Heart left ventricle (tissue), 16 donors: ENCODE measurements at regions of chr2 and their contacts with region 1.

Region 1: DNA sequence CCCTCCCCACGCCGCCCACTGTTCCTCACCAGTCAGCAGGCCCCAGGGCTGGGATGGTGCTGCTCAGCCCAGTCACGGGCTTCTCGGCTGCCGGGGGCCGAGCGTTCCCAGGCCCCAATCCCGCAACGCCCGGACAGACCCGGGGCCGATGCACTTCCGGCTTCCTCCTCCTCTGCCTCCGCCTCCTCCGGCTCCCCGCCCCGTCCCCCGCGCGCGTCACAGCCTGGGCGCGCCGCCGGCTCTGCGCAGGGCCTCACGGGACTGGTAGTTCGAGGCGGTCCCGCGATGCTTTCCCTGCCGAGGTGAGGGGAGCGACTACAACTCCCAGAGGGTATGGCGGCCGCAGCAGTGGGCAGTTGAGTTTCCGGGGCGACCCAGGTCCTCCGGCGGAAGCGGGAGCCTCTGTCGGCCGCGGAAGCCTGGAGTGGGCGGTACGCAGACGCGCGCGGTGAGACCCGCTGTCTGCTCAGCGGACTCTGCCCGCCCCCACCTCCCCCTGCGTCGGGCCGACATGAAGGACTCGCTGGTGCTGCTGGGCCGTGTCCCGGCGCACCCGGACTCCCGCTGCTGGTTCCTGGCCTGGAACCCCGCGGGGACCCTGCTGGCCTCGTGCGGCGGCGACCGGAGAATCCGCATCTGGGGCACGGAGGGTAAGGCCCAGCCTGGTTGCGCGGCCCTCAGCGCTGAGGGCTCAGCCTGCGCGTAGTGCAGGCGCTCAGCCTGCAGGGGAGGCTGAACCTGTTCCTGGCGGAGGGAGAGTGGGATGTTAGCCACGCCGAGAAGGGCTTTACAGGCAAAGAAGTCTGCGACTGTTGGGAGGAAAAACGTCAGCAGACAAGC is at the starts of genes CIAO1 and TMEM127:
- DNase-seq: peak; percentile 99 to 100 (median 99)
- ATAC-seq: peak; percentile 95 to 97 (median 96)
- H3K4me3 ChIP-seq: peak within 1 kb of the TSS; percentile 72 to 100 (median 90)
- H3K27ac ChIP-seq: peak within 1 kb of the TSS; percentile 86 to 98 (median 95)
- H3K4me1 ChIP-seq: peaks cover 16 to 55% (median 49%) of the 10 kb centered on the region in 12 donors
- H3K27me3 ChIP-seq: no peaks in the 10 kb centered on the region
- CTCF ChIP-seq: peak in 7 of 12 donors; percentile 7 to 30 (median 20)
- POLR2A ChIP-seq: peak; percentile 91 to 97
- total RNA-seq, gene CIAO1: 57.7 to 109 (median 68.7) TPM
- total RNA-seq, gene TMEM127: 71.8 to 134 (median 103) TPM

Region 2: GRCh38 chr2:96145036-96145847 is 120.8 kb before region 1 on chr2 and contains the start of gene DUSP2:
- intact Hi-C with region 1: loop called in 3 of 10 experiments (anchors 5 to 10 kb)
- DNase-seq: peak; percentile 77 to 89 (median 79)
- ATAC-seq: peak; percentile 66 to 91 (median 85)
- H3K4me3 ChIP-seq: peak within 1 kb of the TSS; percentile 29 to 69 (median 56)
- H3K27ac ChIP-seq: peak within 1 kb of the TSS; percentile 4 to 90 (median 50)
- H3K4me1 ChIP-seq: peaks cover 0 to 60% (median 27%) of the 10 kb centered on the region in 12 donors
- H3K27me3 ChIP-seq: peaks cover 0 to 7% (median 0%) of the 10 kb centered on the region in 9 donors
- CTCF ChIP-seq: peak in 2 of 12 donors; percentile 20 to 26
- POLR2A ChIP-seq: peak in 1 of 2 donors; percentile 60
- total RNA-seq, gene DUSP2: 0.56 to 11.1 (median 2.7) TPM